T-cell (primary cell): ENCODE measurements at regions of chr1 and their contacts with region 1.

Region 1: DNA sequence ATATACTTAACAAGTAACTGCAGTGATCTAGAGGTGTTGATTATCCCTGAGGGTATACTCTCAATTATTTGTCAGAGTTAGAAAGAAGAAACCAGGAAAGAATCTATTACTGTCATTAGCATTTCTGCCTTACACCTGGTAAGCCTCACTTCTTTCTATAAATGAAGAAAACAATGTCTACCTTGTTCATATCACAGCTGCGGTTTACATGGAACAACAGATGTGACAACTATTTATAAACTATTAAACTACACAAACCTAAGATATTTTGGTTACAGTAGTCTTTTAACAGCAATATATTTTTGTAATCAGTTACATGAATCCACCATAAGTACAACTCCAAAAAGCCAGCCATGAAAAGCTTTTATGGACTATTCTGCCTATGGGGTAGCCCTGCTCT is 40.7 kb downstream of the GON4L start:
- DNase-seq: no peak
- ATAC-seq: no peak
- H3K4me3 ChIP-seq: no peak overlapping the region
- H3K4me3 Mint-ChIP-seq: no peak overlapping the region
- H3K27ac ChIP-seq: no peak overlapping the region
- H3K27ac Mint-ChIP-seq: no peak overlapping the region
- H3K4me1 ChIP-seq: no peaks in the 10 kb centered on the region
- H3K4me1 Mint-ChIP-seq: no peaks in the 10 kb centered on the region
- H3K27me3 ChIP-seq: no peaks in the 10 kb centered on the region
- H3K27me3 Mint-ChIP-seq: no peaks in the 10 kb centered on the region

Region 2: GRCh38 chr1:155794605-155795245 is 21.6 kb before region 1 on chr1:
- CTCF ChIA-PET with region 1: no interaction called
- POLR2A ChIA-PET with region 1: no interaction called
- DNase-seq: no peak
- ATAC-seq: no peak
- H3K4me3 ChIP-seq: no peak overlapping the region
- H3K4me3 Mint-ChIP-seq: no peak overlapping the region
- H3K27ac ChIP-seq: no peak overlapping the region
- H3K27ac Mint-ChIP-seq: peak overlapping the region in 1 of 2 donors; percentile 8
- H3K4me1 ChIP-seq: no peaks in the 10 kb centered on the region
- H3K4me1 Mint-ChIP-seq: no peaks in the 10 kb centered on the region
- H3K27me3 ChIP-seq: no peaks in the 10 kb centered on the region
- H3K27me3 Mint-ChIP-seq: no peaks in the 10 kb centered on the region

Region 3: GRCh38 chr1:155893389-155894142 is 77.2 kb after region 1 on chr1:
- CTCF ChIA-PET with region 1: no interaction called
- POLR2A ChIA-PET with region 1: interaction called in 1 of 2 experiments, 21 read pairs
- DNase-seq: peak in 18 of 35 experiments; percentile 2 to 62 (median 16)
- ATAC-seq: peak; percentile 81 to 97 (median 94)
- H3K4me3 ChIP-seq: no peak overlapping the region
- H3K4me3 Mint-ChIP-seq: peak overlapping the region in 1 of 3 donors; percentile 38
- H3K27ac ChIP-seq: peak overlapping the region; percentile 30
- H3K27ac Mint-ChIP-seq: peak overlapping the region; percentile 82 to 88
- H3K4me1 ChIP-seq: peaks cover 9 to 14% of the 10 kb centered on the region in 2 experiments
- H3K4me1 Mint-ChIP-seq: peaks cover 17 to 18% (median 17%) of the 10 kb centered on the region in 3 donors
- H3K27me3 ChIP-seq: no peaks in the 10 kb centered on the region
- H3K27me3 Mint-ChIP-seq: no peaks in the 10 kb centered on the region